CD14-positive monocyte (primary cell): ENCODE measurements at regions of chr10 and their contacts with region 1.

Region 1: DNA sequence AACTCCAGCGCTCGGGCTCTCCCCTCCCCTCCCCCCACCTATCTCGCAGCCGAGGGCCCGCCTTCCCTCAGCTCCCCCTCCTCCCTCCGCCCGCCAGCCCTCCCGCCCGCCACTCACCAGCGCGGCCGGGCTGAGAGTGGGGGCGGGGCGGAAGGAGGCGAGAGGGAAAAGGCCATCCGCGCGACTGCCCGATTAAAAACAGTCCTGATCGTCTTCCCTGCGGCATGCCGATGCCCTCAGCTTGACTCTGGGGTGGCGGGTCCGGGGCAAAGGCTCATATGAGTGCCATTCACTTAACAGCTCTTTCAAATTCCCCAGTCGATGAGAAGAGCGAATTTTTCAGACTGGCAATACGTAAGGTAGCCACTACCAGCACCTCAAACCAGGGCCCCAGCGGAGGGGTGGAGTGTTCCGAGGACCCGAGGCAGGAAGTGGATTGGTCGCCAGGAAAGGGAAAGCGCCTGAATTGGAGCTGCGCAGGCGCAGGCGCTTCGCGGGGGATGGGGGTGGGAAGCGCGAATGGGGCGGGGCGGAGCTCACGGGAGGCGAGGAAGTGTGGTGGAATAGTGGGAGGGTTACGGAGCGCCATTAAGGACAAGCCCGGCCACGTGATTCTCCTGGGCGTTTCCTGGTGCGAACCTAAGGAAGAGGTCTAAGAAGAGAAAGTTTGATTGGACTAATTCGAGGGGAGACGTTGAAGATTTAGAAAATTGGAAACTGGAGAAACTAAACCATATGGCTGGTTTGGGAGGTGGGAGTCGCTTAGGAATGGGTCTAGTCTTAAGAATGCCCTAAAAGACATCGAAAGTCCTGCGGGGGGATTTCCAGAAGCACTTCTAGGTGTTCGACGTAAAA is at the start of gene UPF2:
- DNase-seq: peak; percentile 96 to 98 (median 98)
- H3K4me3 ChIP-seq: peak within 1 kb of the TSS; percentile 76 to 100 (median 99)
- H3K4me3 Mint-ChIP-seq: peak within 1 kb of the TSS; percentile 90 to 93
- H3K27ac ChIP-seq: peak within 1 kb of the TSS; percentile 95 to 98
- H3K27ac Mint-ChIP-seq: peak within 1 kb of the TSS; percentile 98 to 100 (median 100)
- H3K4me1 ChIP-seq: peaks cover 19 to 26% of the 10 kb centered on the region in 2 donors
- H3K4me1 Mint-ChIP-seq: peaks cover 32% of the 10 kb centered on the region
- H3K27me3 ChIP-seq: no peaks in the 10 kb centered on the region
- H3K27me3 Mint-ChIP-seq: no peaks in the 10 kb centered on the region
- CTCF ChIP-seq: no peak
- polyA plus RNA-seq, gene UPF2: 2.7 to 6.7 (median 4.3) TPM

Region 2: DNA sequence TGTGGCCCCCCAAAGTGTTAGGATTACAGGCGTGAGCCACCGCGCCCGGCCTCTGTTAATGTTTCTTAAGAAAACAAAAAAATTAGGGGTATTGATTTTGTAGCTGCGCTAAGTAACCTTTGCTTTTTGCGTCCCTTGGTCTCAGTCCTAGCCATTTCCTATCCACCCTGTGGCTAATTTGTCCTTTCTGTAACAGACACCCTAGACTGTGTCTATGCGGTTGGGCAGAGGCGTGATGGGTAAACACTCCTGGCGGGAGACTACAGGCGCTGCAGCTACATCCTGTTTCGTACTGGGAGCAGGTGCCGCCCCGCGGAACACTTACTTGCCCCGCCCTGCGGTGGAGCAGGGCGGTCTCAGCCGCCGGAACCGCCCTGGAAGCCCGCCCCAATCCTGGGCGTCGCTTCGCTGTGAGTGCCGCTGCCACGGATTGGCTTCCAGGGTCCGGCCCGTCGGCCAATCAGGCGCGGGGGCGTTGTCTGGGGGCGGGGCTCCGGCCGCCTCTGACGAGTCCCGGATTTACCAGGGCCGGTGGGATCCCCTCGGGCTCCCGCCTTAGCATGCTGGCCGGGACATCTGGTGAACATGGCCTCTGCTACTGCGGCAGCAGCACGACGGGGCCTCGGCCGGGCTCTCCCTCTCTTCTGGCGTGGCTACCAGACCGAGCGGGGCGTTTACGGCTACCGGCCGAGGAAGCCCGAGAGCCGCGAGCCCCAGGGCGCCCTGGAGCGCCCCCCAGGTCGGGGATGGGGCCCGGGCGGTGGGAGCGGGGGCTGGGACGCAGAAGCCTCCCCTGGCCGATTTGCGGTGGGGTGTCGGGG is 25.6 kb after region 1 on chr10 and contains the start of gene DHTKD1:
- intact Hi-C with region 1: loop called (anchors 1 to 2 kb)
- DNase-seq: peak; percentile 97 to 98 (median 98)
- H3K4me3 ChIP-seq: peak within 1 kb of the TSS; percentile 83 to 85 (median 83)
- H3K4me3 Mint-ChIP-seq: peak within 1 kb of the TSS; percentile 87 to 91
- H3K27ac ChIP-seq: peak within 1 kb of the TSS; percentile 52 to 78
- H3K27ac Mint-ChIP-seq: peak within 1 kb of the TSS; percentile 79 to 93 (median 89)
- H3K4me1 ChIP-seq: peaks cover 12 to 23% of the 10 kb centered on the region in 2 donors
- H3K4me1 Mint-ChIP-seq: peaks cover 19% of the 10 kb centered on the region
- H3K27me3 ChIP-seq: no peaks in the 10 kb centered on the region
- H3K27me3 Mint-ChIP-seq: peaks cover 0 to 2% (median 0%) of the 10 kb centered on the region in 3 donors
- CTCF ChIP-seq: peak; percentile 34
- polyA plus RNA-seq, gene DHTKD1: 7.0 to 12.1 (median 11.2) TPM

Region 3: GRCh38 chr10:12129222-12130111 is 86.4 kb after region 1 on chr10 and contains the start of gene SEC61A2:
- intact Hi-C with region 1: loop called in 1 of 2 experiments (anchors 5 kb)
- DNase-seq: peak; percentile 90 to 93 (median 91)
- H3K4me3 ChIP-seq: peak within 1 kb of the TSS; percentile 74 to 91 (median 87)
- H3K4me3 Mint-ChIP-seq: peak within 1 kb of the TSS; percentile 82 to 90
- H3K27ac ChIP-seq: peak within 1 kb of the TSS; percentile 74 to 77
- H3K27ac Mint-ChIP-seq: peak within 1 kb of the TSS; percentile 71 to 88 (median 83)
- H3K4me1 ChIP-seq: peaks cover 12 to 21% of the 10 kb centered on the region in 2 donors
- H3K4me1 Mint-ChIP-seq: peaks cover 12% of the 10 kb centered on the region
- H3K27me3 ChIP-seq: no peaks in the 10 kb centered on the region
- H3K27me3 Mint-ChIP-seq: peaks cover 0 to 3% (median 0%) of the 10 kb centered on the region in 3 donors
- CTCF ChIP-seq: no peak
- polyA plus RNA-seq, gene SEC61A2: 0.30 to 3.4 (median 0.98) TPM

Region 4: GRCh38 chr10:12140038-12140437 is 97.0 kb after region 1 on chr10:
- intact Hi-C with region 1: no loop called
- DNase-seq: no peak
- H3K4me3 ChIP-seq: no peak overlapping the region
- H3K4me3 Mint-ChIP-seq: no peak overlapping the region
- H3K27ac ChIP-seq: no peak overlapping the region
- H3K27ac Mint-ChIP-seq: peak overlapping the region in 2 of 7 donors; percentile 45 to 63
- H3K4me1 ChIP-seq: no peaks in the 10 kb centered on the region
- H3K4me1 Mint-ChIP-seq: no peaks in the 10 kb centered on the region
- H3K27me3 ChIP-seq: no peaks in the 10 kb centered on the region
- H3K27me3 Mint-ChIP-seq: peaks cover 0 to 2% (median 2%) of the 10 kb centered on the region in 3 donors
- CTCF ChIP-seq: no peak

Region 5: GRCh38 chr10:12195603-12196506 is 152.8 kb after region 1 on chr10 and contains the starts of genes CDC123 and NUDT5:
- intact Hi-C with region 1: loop called (anchors 5 to 10 kb)
- DNase-seq: peak; percentile 72 to 82 (median 79)
- H3K4me3 ChIP-seq: peak within 1 kb of the TSS; percentile 71 to 98 (median 83)
- H3K4me3 Mint-ChIP-seq: peak within 1 kb of the TSS; percentile 98
- H3K27ac ChIP-seq: peak within 1 kb of the TSS; percentile 90 to 91
- H3K27ac Mint-ChIP-seq: peak within 1 kb of the TSS; percentile 97 to 100 (median 99)
- H3K4me1 ChIP-seq: peaks cover 35 to 62% of the 10 kb centered on the region in 2 donors
- H3K4me1 Mint-ChIP-seq: peaks cover 66% of the 10 kb centered on the region
- H3K27me3 ChIP-seq: no peaks in the 10 kb centered on the region
- H3K27me3 Mint-ChIP-seq: no peaks in the 10 kb centered on the region
- CTCF ChIP-seq: no peak
- polyA plus RNA-seq, gene CDC123: 38.2 to 78.7 (median 76.0) TPM
- polyA plus RNA-seq, gene NUDT5: 28.3 to 51.1 (median 43.7) TPM

Region 6: GRCh38 chr10:12777840-12778585 is 735.0 kb after region 1 on chr10:
- intact Hi-C with region 1: no loop called
- DNase-seq: no peak
- H3K4me3 ChIP-seq: no peak overlapping the region
- H3K4me3 Mint-ChIP-seq: no peak overlapping the region
- H3K27ac ChIP-seq: no peak overlapping the region
- H3K27ac Mint-ChIP-seq: peak overlapping the region in 1 of 7 donors; percentile 57
- H3K4me1 ChIP-seq: no peaks in the 10 kb centered on the region
- H3K4me1 Mint-ChIP-seq: peaks cover 3% of the 10 kb centered on the region
- H3K27me3 ChIP-seq: no peaks in the 10 kb centered on the region
- H3K27me3 Mint-ChIP-seq: peaks cover 0 to 3% (median 0%) of the 10 kb centered on the region in 3 donors
- CTCF ChIP-seq: no peak